Posterior cingulate gyrus (tissue), 11 donors: ENCODE measurements at regions of chr16 and their contacts with region 1.

Region 1: GRCh38 chr16:85659805-85660495 is 28.8 kb downstream of the GINS2 start:
- DNase-seq: peak in 9 of 10 donors; percentile 45 to 96 (median 79)

Region 2: GRCh38 chr16:85341972-85342695 is 317.8 kb before region 1 on chr16:
- intact Hi-C with region 1: no loop called
- DNase-seq: no peak

Region 3: DNA sequence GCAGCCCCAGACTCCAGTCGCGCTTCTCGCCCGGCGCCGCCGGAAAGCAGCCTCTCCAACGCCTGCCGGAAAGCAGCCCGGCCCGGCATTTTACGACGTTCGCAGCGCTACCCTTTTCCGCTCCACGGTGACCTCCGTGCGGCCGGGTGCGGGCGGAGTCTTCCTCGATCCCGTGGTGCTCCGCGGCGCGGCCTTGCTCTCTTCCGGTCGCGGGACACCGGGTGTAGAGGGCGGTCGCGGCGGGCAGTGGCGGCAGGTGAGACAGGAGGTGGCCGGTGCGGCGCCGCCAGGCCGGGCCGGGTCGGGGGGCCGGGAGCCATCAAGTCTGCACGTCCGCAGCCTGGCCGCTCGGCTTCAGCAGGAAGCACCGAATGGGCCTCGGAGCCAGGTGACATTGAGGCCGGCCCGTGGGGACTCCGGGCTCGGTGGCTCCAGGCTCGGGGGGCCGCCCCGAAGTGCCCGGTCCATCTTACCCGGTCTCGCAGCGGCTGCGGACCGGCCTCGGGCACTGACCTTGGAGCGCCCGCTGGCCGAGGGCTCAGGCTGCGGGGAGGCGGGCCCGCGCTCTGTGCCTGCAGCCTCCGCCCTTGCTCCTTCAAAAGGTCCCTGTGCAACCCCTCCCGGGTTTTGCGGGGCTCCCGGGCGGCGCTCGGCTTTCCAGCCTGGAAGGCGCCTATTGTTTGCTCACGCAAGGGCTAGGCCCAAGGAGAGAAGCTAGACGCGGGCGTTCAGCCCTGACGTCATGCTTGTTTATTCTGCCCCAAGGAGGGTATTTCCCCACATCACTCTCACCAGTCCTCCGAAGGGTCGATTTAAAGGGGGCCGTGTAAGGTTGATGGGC is 139.8 kb after region 1 on chr16 and contains the starts of genes COX4I1 and EMC8:
- intact Hi-C with region 1: loop called (anchors 10 kb)
- DNase-seq: peak; percentile 92 to 99 (median 96)